ENCODE measurements at regions of chr1 and their contacts with region 1.

Region 1: GRCh38 chr1:28602536-28603439 is 10.7 kb downstream of the RAB42 start:
- DNase-seq: peak; percentile 67 to 69
- H3K4me3 ChIP-seq: no peak overlapping the region
- H3K27ac ChIP-seq: no peak overlapping the region
- H3K4me1 ChIP-seq: no peaks in the 10 kb centered on the region
- H3K27me3 ChIP-seq: no peaks in the 10 kb centered on the region
- CTCF ChIP-seq: peak in 4 of 6 experiments; percentile 59 to 81 (median 68)
- POLR2A ChIP-seq: no peak

Region 2: GRCh38 chr1:28359592-28360239 is 243.1 kb before region 1 on chr1:
- intact Hi-C with region 1: loop called (anchors 5 kb)
- DNase-seq: peak; percentile 80 to 83
- H3K4me3 ChIP-seq: no peak overlapping the region
- H3K27ac ChIP-seq: no peak overlapping the region
- H3K4me1 ChIP-seq: no peaks in the 10 kb centered on the region
- H3K27me3 ChIP-seq: no peaks in the 10 kb centered on the region
- CTCF ChIP-seq: peak in 5 of 6 experiments; percentile 44 to 69 (median 64)
- POLR2A ChIP-seq: no peak

Region 3: DNA sequence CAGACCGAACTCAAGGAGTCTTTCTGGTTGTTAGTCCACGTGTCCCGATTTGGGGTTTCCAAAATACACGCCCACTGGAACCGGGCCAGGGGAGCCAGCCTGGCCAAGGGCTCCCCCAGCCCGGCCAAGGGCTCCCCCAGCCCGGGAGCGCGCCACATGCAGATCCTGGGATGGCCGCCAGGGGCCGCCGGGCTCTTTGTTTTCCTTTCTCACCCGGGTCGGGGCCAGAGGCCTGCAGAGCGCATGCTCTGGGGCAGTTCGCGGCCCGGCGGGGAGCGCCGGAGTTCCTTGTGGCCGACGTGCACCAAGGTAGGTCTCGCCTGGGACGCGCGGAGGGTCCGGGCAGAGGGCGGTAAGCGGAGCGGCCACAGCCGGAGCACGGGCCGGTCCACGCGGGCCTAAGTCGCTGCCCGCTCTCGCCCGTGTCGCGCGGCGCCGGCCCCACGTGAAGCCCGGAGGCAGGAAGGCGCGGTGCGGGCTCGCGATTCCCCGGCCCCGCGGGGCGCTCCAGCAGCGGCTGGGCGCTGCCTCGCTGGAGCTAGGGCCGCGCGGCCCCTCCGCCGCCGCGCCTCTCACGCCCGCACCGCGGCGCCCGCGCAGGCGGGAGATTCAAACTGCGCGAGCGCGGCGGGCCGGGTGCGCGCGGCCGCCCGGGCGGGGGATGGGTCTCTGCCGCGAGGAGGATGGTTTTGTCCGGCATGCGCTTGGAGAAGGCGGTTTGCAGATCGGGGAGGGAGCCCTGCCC is 84.6 kb before region 1 on chr1:
- intact Hi-C with region 1: loop called (anchors 5 kb)
- DNase-seq: peak; percentile 90 to 93
- H3K4me3 ChIP-seq: peak overlapping the region in 2 of 3 donors; percentile 51 to 58
- H3K27ac ChIP-seq: peak overlapping the region in 2 of 3 donors; percentile 29 to 77
- H3K4me1 ChIP-seq: peaks cover 7 to 12% of the 10 kb centered on the region in 2 donors
- H3K27me3 ChIP-seq: no peaks in the 10 kb centered on the region
- CTCF ChIP-seq: peak; percentile 91 to 100 (median 97)
- POLR2A ChIP-seq: peak in 1 of 2 donors; percentile 72

Region 4: GRCh38 chr1:28537457-28538199 is 65.2 kb before region 1 on chr1:
- intact Hi-C with region 1: no loop called
- DNase-seq: no peak
- H3K4me3 ChIP-seq: no peak overlapping the region
- H3K27ac ChIP-seq: peak overlapping the region in 2 of 3 donors; percentile 5 to 17
- H3K4me1 ChIP-seq: peaks cover 5 to 9% of the 10 kb centered on the region in 2 donors
- H3K27me3 ChIP-seq: no peaks in the 10 kb centered on the region
- CTCF ChIP-seq: no peak
- POLR2A ChIP-seq: no peak

Region 5: DNA sequence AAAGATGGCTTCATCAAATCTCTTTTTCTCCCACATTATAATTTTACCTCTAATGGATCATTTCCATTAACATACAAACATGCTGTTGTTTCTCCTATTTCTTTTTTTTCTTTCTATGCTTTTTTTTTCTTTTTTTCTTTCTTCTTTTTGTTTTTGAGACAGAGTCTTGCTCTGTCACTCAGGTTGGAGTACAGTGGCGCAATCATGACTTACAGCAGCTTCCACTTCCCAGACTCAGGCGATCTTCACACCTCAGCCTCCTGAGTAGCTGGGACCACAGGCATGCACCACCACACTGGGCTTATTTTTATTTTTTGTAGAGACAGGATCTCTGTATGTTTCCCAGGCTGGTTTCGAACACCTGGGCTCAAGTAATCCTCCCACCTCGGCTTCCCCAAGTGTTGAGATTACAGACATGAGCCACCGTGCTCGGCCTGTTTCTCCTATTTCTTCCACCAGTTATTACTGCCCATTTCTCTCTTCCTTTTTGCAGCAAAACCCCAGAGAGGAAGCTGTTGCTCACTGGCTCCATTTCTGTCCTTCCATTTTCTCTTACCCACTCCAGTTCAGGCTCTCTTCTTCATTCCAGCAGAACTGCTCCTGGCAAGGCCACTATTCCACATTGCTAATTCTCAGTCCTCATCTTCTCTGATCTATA is 177.1 kb after region 1 on chr1:
- intact Hi-C with region 1: no loop called
- DNase-seq: no peak
- H3K4me3 ChIP-seq: no peak overlapping the region
- H3K27ac ChIP-seq: no peak overlapping the region
- H3K4me1 ChIP-seq: peaks cover 2 to 4% of the 10 kb centered on the region in 2 donors
- H3K27me3 ChIP-seq: no peaks in the 10 kb centered on the region
- CTCF ChIP-seq: no peak
- POLR2A ChIP-seq: no peak